GM10248 (cell line): ENCODE measurements at regions of chr1 and their contacts with region 1.

Region 1: DNA sequence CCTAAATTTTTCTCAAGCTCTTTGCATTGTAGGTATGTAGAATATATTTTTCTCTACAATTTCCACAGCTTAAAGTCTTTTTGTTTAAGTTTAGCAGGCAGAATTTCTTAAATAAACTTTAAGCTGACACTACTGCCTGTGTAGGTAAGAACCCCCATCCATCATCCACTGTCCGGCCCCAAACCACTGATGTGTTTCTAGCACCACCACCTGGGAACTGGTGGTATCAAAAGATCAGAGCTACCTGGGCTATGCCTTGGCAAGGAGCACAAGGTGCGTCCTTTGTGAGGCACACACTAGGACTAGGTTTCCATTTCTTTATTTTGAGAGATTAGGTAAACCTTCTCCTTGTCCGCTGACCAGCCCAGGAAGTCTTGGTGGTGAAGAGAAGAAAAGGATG is 10.5 kb upstream of the LELP1 start:
- DNase-seq: no peak
- CTCF ChIP-seq: peak; percentile 50

Region 2: DNA sequence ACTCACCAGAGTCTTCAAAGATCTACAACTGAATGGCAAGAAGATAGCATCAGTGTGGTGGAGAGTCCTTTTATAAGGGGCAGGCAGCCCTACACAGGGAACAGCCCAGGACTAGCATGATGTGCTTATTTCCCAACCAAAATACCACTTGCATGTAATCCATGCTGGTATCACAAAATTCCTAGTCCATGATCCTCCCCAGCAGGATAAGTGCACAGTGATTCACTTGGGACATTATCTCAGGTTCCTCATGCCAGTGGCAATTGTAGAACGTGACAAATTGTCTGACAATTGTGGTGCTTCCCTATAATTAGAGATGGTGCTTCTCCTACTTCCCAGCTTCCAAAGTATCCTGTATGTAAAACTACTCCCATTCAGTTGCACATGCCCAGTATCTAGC is 41.9 kb before region 1 on chr1 and contains the start of gene SPRR2G:
- CTCF ChIA-PET with region 1: interaction called, 12 read pairs
- POLR2A ChIA-PET with region 1: no interaction called
- DNase-seq: no peak
- CTCF ChIP-seq: no peak

Region 3: GRCh38 chr1:153220606-153221303 is 28.1 kb after region 1 on chr1:
- CTCF ChIA-PET with region 1: interaction called, 15 read pairs
- POLR2A ChIA-PET with region 1: no interaction called
- DNase-seq: no peak
- CTCF ChIP-seq: no peak